ENCODE measurements at regions of chr4 and their contacts with region 1.

Region 1: GRCh38 chr4:109433205-109434006 is at the start of gene SEC24B:
- DNase-seq: peak; percentile 85
- H3K4me3 Mint-ChIP-seq: peak within 1 kb of the TSS; percentile 81
- H3K27ac Mint-ChIP-seq: peak within 1 kb of the TSS; percentile 83
- H3K4me1 Mint-ChIP-seq: peaks cover 33% of the 10 kb centered on the region
- H3K27me3 Mint-ChIP-seq: no peaks in the 10 kb centered on the region
- CTCF ChIP-seq: peak; percentile 94
- total RNA-seq, gene SEC24B: 33.9 and 35.0 TPM in 2 replicates

Region 2: DNA sequence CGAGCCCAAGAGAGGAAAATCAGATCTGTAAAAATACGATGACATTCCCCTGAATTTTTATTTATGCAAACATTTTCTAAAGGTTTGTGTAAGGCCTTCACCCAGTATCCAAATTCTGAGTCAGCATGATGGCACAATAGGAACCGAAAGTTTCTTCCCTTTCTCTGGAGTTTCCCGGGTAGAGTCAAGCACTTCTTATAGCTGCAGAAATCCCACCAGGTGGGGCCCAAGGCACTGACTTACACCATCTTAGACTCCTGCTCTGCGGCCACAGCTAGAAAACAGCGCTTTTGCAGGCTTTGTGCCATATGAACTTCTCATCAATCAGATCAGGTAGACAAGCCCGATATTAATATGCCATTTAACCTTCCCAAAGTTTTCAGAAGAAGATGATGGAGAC is 1278.0 kb before region 1 on chr4:
- CTCF ChIA-PET with region 1: no interaction called
- POLR2A ChIA-PET with region 1: no interaction called
- intact Hi-C with region 1: no loop called
- DNase-seq: peak; percentile 62
- H3K4me3 Mint-ChIP-seq: no peak overlapping the region
- H3K27ac Mint-ChIP-seq: no peak overlapping the region
- H3K4me1 Mint-ChIP-seq: no peaks in the 10 kb centered on the region
- H3K27me3 Mint-ChIP-seq: peaks cover 11% of the 10 kb centered on the region
- CTCF ChIP-seq: no peak

Region 3: GRCh38 chr4:109444182-109444844 is 10.9 kb after region 1 on chr4:
- CTCF ChIA-PET with region 1: interaction called, 6 read pairs
- POLR2A ChIA-PET with region 1: interaction called, 25 read pairs
- intact Hi-C with region 1: no loop called
- DNase-seq: no peak
- H3K4me3 Mint-ChIP-seq: no peak overlapping the region
- H3K27ac Mint-ChIP-seq: peak overlapping the region; percentile 76
- H3K4me1 Mint-ChIP-seq: peaks cover 50% of the 10 kb centered on the region
- H3K27me3 Mint-ChIP-seq: no peaks in the 10 kb centered on the region
- CTCF ChIP-seq: no peak

Region 4: GRCh38 chr4:109472343-109472761 is 38.9 kb after region 1 on chr4:
- CTCF ChIA-PET with region 1: interaction called, 7 read pairs
- POLR2A ChIA-PET with region 1: interaction called, 25 read pairs
- intact Hi-C with region 1: no loop called
- DNase-seq: peak; percentile 61
- H3K4me3 Mint-ChIP-seq: no peak overlapping the region
- H3K27ac Mint-ChIP-seq: no peak overlapping the region
- H3K4me1 Mint-ChIP-seq: peaks cover 18% of the 10 kb centered on the region
- H3K27me3 Mint-ChIP-seq: no peaks in the 10 kb centered on the region
- CTCF ChIP-seq: no peak

Region 5: DNA sequence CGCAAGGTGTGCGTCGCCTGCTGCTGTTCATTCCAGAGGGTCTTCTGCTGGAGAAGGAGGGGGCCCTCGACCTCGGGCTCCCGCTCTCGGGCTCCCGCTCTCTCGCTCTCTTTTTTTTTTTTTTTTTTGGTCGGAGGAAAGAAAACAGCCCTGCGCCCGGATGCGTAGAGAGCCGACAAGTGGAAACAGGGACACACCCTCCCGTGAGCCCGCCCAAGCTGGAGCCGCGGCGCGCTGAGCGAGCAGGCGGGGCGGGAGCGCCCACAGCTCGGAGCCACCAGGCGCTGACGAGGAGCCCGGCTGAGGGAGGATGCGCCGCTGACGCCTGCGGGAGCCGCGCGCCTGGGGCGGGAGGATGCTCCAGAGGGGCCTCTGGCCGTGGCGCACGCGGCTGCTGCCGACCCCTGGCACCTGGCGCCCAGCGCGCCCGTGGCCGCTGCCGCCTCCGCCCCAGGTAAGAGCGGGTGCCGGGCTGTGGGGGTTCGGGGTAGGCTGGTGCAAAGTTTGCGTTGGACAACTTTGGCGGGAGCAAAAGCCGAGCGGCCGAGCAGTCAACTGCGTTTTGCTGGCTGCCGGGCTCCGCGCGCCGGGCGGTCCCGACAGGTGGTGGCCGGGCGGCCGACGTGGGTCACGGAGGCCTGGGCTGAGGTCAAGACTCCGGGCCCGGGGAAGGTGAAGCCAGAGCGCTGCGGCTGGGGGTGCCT is 126.7 kb after region 1 on chr4 and contains the start of gene MCUB:
- CTCF ChIA-PET with region 1: interaction called, 8 read pairs
- POLR2A ChIA-PET with region 1: interaction called, 31 read pairs
- intact Hi-C with region 1: loop called (anchors 2 kb)
- DNase-seq: peak; percentile 92
- H3K4me3 Mint-ChIP-seq: peak within 1 kb of the TSS; percentile 80
- H3K27ac Mint-ChIP-seq: peak within 1 kb of the TSS; percentile 66
- H3K4me1 Mint-ChIP-seq: peaks cover 10% of the 10 kb centered on the region
- H3K27me3 Mint-ChIP-seq: no peaks in the 10 kb centered on the region
- CTCF ChIP-seq: no peak
- total RNA-seq, gene MCUB: 11.0 and 16.3 TPM in 2 replicates

Region 6: DNA sequence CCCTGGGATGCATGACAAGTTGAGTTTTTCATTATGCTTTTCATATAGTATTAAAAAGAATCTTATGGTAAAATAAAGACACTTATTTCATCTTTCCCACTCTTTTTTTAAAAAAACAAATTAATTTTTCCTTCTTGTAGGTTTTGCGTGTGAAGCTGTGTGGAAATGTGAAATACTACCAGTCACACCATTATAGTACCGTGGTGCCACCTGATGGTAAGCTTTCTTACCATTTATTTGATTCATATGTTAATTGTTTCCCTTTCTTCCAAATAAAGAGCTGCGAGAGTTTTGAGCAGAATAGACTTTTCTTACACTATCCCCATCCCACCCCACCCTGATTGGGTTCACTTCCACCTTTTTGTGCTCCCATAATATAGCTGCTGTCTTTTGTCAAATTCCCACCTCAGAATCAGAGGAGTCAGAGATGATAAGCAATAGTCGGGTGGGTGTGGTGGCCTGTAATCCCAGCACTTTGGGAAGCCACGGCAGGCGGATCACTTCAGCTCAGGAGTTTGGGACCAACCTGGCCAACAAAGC is 225.5 kb after region 1 on chr4:
- CTCF ChIA-PET with region 1: no interaction called
- POLR2A ChIA-PET with region 1: no interaction called
- intact Hi-C with region 1: loop called (anchors 5 kb)
- DNase-seq: peak; percentile 1
- H3K4me3 Mint-ChIP-seq: no peak overlapping the region
- H3K27ac Mint-ChIP-seq: no peak overlapping the region
- H3K4me1 Mint-ChIP-seq: no peaks in the 10 kb centered on the region
- H3K27me3 Mint-ChIP-seq: no peaks in the 10 kb centered on the region
- CTCF ChIP-seq: no peak

Region 7: GRCh38 chr4:109846395-109847098 is 413.1 kb after region 1 on chr4:
- CTCF ChIA-PET with region 1: no interaction called
- POLR2A ChIA-PET with region 1: no interaction called
- intact Hi-C with region 1: no loop called
- DNase-seq: no peak
- H3K4me3 Mint-ChIP-seq: no peak overlapping the region
- H3K27ac Mint-ChIP-seq: no peak overlapping the region
- H3K4me1 Mint-ChIP-seq: no peaks in the 10 kb centered on the region
- H3K27me3 Mint-ChIP-seq: no peaks in the 10 kb centered on the region
- CTCF ChIP-seq: no peak

Region 8: GRCh38 chr4:109977854-109978501 is 544.6 kb after region 1 on chr4:
- CTCF ChIA-PET with region 1: interaction called, 16 read pairs
- POLR2A ChIA-PET with region 1: interaction called, 3 read pairs
- intact Hi-C with region 1: no loop called
- DNase-seq: peak; percentile 47
- H3K4me3 Mint-ChIP-seq: no peak overlapping the region
- H3K27ac Mint-ChIP-seq: no peak overlapping the region
- H3K4me1 Mint-ChIP-seq: no peaks in the 10 kb centered on the region
- H3K27me3 Mint-ChIP-seq: no peaks in the 10 kb centered on the region
- CTCF ChIP-seq: peak; percentile 60

Measured in MCF 10A (cell line).